Heart right ventricle (tissue), 16 donors: ENCODE measurements at regions of chr12 and their contacts with region 1.

Region 1: DNA sequence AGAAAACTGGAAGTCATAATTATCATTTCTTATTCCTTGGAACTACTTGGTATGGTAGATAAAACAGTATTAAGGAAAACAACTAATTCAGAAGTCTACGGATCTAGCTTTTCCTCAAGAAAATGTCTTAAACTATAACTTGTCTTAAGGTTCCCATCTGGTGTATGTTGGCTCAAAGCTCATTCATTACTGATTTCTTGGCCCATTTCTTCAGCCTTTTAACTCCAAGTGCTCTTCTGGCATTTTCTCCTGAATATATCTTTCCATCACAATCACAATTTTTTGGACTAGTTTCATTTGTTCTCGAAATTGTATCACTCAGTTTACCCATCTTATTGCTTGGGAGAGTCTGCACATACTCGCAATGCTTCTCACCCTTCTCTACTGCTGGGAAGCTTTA is 150.1 kb downstream of the C12orf50 start:
- DNase-seq: no peak
- ATAC-seq: no peak
- H3K4me3 ChIP-seq: no peak overlapping the region
- H3K27ac ChIP-seq: no peak overlapping the region
- H3K4me1 ChIP-seq: no peaks in the 10 kb centered on the region
- H3K27me3 ChIP-seq: no peaks in the 10 kb centered on the region
- CTCF ChIP-seq: no peak

Region 2: DNA sequence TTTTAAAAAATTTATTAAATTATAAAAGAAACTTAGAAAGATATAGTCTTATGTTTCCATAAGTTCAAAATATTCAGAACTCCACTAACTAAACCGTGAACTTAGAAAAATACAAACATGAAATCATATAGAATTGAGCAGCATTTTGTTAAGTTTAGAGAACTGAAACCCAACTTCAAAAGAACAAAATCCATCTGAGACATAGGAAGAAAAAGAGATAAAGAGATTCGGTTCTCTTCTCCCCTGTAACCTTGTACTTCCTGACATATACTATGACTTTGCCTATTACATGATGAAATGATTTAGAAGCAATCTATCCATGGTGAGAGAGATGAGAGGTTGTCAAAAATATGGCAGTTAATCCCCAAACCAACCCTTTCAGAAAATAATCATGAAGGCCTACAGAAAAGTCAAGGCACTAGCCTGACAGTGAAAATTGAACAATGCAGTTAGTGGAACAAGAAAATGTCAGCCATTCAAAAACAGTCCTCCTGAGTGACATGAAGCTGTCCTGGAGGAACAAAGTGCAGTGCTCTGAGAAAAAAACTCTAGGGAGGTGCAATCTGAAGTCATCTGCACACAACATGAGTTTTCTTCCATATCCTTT is 106.0 kb after region 1 on chr12:
- intact Hi-C with region 1: loop called in 1 of 10 experiments (anchors 5 kb)
- DNase-seq: no peak
- ATAC-seq: no peak
- H3K4me3 ChIP-seq: no peak overlapping the region
- H3K27ac ChIP-seq: no peak overlapping the region
- H3K4me1 ChIP-seq: no peaks in the 10 kb centered on the region
- H3K27me3 ChIP-seq: peaks cover 0 to 3% (median 0%) of the 10 kb centered on the region in 7 donors
- CTCF ChIP-seq: no peak

Region 3: GRCh38 chr12:88035907-88036289 is 156.8 kb after region 1 on chr12:
- intact Hi-C with region 1: no loop called
- DNase-seq: no peak
- ATAC-seq: peak in 4 of 8 donors; percentile 3 to 25 (median 14)
- H3K4me3 ChIP-seq: peak overlapping the region; percentile 58 to 97 (median 80)
- H3K27ac ChIP-seq: peak overlapping the region in 9 of 10 donors; percentile 42 to 83 (median 75)
- H3K4me1 ChIP-seq: peaks cover 0 to 39% (median 22%) of the 10 kb centered on the region in 9 donors
- H3K27me3 ChIP-seq: no peaks in the 10 kb centered on the region
- CTCF ChIP-seq: no peak